Posterior cingulate gyrus (tissue), 11 donors: ENCODE measurements at regions of chr9 and their contacts with region 1.

Region 1: DNA sequence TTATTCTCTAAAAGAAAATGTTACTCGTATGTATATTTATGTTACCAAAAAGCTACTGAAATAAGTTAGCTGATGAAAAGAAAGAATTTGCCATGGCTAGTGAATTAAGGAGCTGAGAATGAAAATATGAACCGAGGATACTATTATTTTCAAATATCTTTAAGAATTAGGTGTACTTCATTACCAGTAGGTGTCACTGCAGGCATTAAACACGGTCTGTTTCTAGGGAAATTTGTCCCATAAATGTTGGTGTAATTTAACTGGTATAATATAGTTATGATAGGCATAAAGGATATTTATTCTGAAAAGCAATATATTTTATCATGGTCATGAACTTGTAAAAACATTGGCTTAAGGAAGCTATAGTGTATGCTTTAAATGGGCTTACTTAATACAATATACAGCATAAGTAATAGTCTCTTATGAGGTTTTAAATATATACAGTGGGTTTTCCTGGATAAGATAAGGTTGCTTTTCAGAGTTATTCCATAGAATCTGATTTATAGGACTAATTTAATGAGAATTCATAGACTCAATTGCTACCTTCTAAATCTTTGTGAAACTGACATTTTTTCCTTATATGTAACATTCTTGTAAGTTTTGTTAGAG is 72.4 kb upstream of the MPDZ start:
- DNase-seq: no peak

Region 2: DNA sequence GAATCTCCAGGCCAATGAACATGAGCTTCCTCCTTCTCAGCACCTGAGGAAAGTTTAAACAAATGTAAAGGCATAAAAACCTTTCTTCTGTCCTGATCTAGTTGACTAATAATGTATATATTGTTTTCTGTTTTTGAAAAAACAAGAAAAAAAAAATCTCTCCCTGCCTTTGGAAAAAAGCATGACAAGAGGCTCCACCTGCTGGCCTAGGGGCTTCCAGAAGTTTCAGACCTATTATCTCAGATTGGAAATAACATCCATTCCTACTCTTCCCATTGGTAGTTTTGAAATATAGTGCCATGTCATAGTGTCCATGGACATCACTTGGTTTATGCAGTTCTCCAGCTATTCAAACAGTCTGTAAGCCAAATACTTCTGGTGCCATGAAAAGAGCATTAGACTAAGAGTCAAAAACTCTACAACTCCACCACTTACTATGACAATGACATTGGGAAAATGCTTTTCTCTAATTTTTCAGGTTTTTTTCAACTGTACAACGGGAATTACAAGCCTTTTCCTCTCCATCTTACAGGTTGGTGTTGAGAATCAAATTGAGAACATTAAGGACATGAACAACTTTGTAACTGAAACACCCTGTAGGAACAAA is 337.2 kb after region 1 on chr9:
- intact Hi-C with region 1: loop called (anchors 10 kb)
- DNase-seq: peak in 4 of 10 donors; percentile 11 to 67 (median 48)

Region 3: GRCh38 chr9:14433351-14434157 is 1081.7 kb after region 1 on chr9:
- intact Hi-C with region 1: loop called (anchors 5 kb)
- DNase-seq: peak in 9 of 10 donors; percentile 18 to 94 (median 51)